RWPE1 (cell line): ENCODE measurements at regions of chr17 and their contacts with region 1.

Region 1: GRCh38 chr17:45155029-45155428 is 6.6 kb upstream of the HEXIM2 start:
- DNase-seq: no peak
- H3K27ac ChIP-seq: peak overlapping the region; percentile 54
- CTCF ChIP-seq: no peak

Region 2: GRCh38 chr17:45258981-45259380 is 104.0 kb after region 1 on chr17:
- CTCF ChIA-PET with region 1: interaction called, 3 read pairs
- POLR2A ChIA-PET with region 1: interaction called, 10 read pairs
- DNase-seq: no peak
- H3K27ac ChIP-seq: no peak overlapping the region
- CTCF ChIP-seq: no peak

Region 3: GRCh38 chr17:45341533-45342158 is 186.6 kb after region 1 on chr17:
- CTCF ChIA-PET with region 1: no interaction called
- POLR2A ChIA-PET with region 1: no interaction called
- DNase-seq: peak; percentile 43
- H3K27ac ChIP-seq: peak overlapping the region; percentile 42
- CTCF ChIP-seq: no peak